Activated CD4-positive, alpha-beta T cell treated with anti-CD3 and anti-CD28 coated beads, Interleukin-2, amount 10 ng/mL, durations not matched to agents 7 days and 5 days (primary cell): ENCODE measurements at regions of chr1 and their contacts with region 1.

Region 1: DNA sequence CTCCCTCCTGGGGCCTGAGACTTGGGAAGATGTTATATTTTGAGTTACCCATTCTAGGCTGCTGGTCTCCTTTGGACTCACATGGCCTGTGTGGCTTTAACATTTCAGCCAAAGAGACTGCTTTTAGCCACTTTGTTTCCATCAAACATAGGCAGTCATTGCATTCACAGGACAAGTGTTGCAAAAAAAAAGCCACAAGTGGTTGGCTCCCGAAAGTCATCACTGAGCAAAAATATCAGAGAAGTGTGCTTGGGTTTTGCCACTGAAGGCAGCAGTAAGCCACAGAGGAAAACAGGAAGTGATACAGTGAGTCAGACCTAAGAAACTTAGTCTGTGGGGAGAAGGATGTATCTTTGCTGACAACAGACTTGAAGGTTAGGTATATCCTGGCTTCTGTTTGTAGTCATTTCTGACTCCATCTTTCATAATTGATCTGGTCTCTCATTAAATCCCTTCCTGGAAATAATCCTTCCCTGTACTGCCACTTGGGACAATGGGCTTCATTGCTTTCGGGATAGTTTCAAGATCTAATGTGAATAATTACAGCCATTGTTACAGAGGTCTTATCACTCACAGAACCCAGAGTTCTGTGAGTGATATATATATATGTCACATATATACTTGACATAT is 80.9 kb downstream of the COLGALT2 start:
- DNase-seq: peak; percentile 76
- H3K4me3 Mint-ChIP-seq: peak overlapping the region; percentile 6
- H3K27ac Mint-ChIP-seq: no peak overlapping the region
- H3K4me1 Mint-ChIP-seq: peaks cover 2% of the 10 kb centered on the region
- H3K27me3 Mint-ChIP-seq: peaks cover 5% of the 10 kb centered on the region

Region 2: DNA sequence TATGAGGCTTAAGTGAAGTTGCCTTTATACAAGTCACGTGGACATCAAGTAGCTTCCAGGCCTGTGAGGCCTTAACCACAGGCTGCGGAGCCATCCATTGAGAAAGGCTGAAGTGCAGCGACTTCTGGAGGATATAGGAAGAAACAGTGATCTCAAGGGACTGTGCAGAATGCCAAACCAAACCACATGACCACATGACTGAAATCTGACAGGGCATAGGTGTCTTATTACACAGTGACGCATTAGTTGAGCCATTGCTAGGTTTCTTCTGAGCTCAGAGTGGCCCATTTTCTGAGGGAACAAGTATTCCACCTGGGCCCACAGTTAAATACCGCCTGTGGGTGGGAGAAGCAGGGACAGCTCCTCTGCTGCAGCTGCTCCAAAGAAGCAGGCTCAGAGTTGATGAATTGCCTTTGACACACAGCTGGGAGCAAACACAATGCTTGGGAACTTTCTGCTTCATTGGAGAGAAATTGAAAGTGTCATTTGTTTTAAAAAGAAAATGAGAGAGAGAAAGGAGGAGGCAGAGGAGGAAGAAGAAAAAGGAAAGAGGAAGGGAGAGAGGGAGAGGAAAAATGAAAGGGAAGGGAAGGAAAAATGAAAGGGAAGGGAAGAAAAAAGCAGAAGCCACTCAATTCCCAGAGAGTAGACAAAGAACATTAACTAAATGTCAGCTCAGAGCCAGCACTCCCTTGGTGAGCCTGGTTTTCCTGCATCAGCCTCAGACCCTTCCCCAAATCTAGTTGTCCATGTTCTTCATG is 13.6 kb before region 1 on chr1:
- CTCF ChIA-PET with region 1: interaction called, 15 read pairs
- POLR2A ChIA-PET with region 1: no interaction called
- DNase-seq: no peak
- H3K4me3 Mint-ChIP-seq: no peak overlapping the region
- H3K27ac Mint-ChIP-seq: no peak overlapping the region
- H3K4me1 Mint-ChIP-seq: no peaks in the 10 kb centered on the region
- H3K27me3 Mint-ChIP-seq: no peaks in the 10 kb centered on the region

Region 3: DNA sequence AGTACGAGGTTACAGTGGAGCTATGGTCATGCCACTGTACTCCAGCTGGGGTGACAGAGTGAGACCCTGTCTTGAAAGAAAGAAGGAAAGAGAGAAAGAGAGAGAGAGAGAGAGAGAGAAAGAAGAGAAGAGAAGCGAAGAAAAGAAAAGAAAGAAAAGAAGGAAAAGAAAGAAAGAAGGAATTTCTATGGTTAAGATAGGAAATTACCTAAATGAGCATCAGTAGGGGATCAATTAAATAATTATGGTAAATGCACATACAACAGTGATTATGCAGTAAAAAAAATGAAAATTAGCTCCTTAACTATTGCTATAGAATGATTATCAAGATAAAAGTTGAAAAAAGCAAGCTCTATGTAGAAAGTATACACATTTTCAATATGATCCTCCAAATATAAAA is 21.0 kb after region 1 on chr1:
- CTCF ChIA-PET with region 1: no interaction called
- POLR2A ChIA-PET with region 1: no interaction called
- DNase-seq: no peak
- H3K4me3 Mint-ChIP-seq: no peak overlapping the region
- H3K27ac Mint-ChIP-seq: no peak overlapping the region
- H3K4me1 Mint-ChIP-seq: no peaks in the 10 kb centered on the region
- H3K27me3 Mint-ChIP-seq: peaks cover 1% of the 10 kb centered on the region